A673 (cell line): ENCODE measurements at regions of chr7 and their contacts with region 1.

Region 1: DNA sequence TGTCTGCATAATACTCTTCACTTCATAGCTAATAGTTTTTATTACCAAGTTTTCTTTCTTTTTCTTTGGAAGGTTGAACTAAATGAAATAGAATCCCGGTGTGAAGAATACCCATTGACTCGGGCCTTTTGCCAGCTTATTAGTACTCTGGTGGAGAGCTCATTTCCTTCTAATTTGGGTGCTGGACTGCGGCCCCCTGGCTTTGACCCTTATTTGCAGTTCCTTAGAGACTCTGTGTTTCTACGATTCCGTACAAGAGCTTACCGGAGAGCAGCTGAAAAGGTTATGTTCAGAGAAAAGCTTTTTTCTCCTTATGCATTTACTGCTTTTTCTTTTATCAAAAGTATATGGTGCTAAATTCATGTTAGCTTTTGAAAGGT is 40.2 kb downstream of the NUP205 start:
- DNase-seq: peak; percentile 49
- H3K4me3 ChIP-seq: no peak overlapping the region
- H3K27ac ChIP-seq: no peak overlapping the region
- H3K4me1 ChIP-seq: peaks cover 16% of the 10 kb centered on the region
- H3K27me3 ChIP-seq: no peaks in the 10 kb centered on the region
- CTCF ChIP-seq: no peak

Region 2: DNA sequence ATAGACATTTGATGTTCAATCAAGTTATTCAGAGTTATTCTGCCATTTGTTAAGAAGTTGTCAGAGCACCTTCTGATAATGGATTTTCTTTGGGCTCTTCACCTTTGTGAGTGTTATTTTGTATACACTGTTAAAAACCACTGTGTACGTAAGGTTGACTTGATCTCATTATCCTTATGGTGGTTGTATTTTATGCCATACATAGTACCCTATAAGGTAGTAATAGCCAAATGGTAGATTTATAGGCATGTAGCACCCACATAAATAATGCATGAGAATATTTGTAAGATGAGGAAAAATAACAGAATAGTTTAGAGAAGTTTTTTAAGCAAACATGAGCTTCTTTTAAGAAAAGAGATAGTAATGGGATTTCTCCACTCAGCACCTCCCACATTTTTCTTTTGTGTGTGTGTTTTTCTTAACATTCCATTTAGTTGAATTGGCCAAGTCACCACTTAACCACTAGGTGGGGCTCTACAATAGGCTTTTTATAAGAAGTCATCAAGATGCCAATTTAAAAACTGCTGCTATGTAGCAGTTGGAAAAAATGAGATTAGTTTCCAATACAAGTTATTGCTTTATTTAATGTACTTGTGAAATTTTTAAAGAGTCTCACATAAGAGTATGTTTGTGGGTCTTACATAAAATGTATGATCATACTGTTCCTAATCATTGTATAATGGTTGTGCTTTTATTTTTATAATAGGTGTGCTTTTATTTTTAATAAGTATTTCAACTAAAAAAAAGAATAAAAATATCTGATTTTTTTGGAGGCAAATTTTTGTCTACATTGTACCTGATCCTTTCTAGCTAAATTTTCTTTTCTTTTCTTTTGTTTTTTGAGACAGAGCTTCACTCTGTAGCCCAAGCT is 23.3 kb after region 1 on chr7:
- CTCF ChIA-PET with region 1: no interaction called
- POLR2A ChIA-PET with region 1: no interaction called
- intact Hi-C with region 1: loop called (anchors 5 kb)
- DNase-seq: peak; percentile 87
- H3K4me3 ChIP-seq: no peak overlapping the region
- H3K27ac ChIP-seq: no peak overlapping the region
- H3K4me1 ChIP-seq: no peaks in the 10 kb centered on the region
- H3K27me3 ChIP-seq: no peaks in the 10 kb centered on the region
- CTCF ChIP-seq: peak; percentile 96